ENCODE measurements at regions of chr18 and their contacts with region 1.

Region 1: GRCh38 chr18:63105636-63106316 is 213.8 kb downstream of the BCL2 start:
- DNase-seq: no peak
- H3K4me3 Mint-ChIP-seq: no peak overlapping the region
- H3K27ac Mint-ChIP-seq: no peak overlapping the region
- H3K4me1 Mint-ChIP-seq: peaks cover 37% of the 10 kb centered on the region
- H3K27me3 Mint-ChIP-seq: peaks cover 20% of the 10 kb centered on the region

Region 2: DNA sequence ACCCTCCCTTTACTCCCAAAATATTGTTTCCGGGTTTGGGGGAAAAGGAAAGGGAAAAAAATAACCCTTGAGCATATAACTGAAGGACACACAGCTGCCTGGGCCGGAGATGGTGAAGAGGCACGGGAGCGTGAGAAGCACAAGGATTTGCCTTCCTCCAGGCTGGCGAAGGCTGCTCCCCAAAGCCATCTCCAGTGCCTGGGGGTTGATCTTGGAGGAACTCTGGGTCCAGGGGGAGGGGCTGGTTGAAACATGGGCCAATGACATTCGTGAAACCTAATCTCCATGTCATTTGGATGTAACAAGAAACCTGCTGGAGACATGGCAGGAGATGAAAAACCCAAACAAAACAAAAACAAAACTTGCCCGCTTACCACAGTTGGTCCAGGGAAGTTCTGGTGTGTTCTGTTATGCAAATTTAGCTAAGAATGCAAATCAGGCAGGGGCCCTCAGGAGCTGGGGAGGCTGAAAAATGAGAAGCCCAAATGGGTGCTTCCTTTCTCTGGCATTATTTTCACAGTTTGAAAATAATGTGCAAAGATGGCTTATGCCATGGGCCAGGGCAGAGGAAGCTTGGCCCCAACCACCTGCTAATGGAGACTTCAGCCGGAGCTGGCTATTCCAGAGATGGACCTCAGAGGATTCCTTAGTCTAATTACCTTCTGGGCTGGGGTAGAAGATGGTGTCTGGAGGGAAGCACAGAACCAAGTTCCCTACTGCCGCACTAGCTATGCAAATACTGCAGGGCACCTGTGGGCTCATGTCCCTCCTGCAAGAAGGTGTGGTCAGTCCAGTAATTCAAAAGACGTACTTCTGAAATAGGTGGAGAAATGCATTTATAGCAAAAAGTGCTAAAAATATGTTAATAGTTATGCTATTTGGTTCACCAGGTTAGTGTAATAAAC is 32.9 kb after region 1 on chr18:
- intact Hi-C with region 1: loop called (anchors 1 kb)
- DNase-seq: no peak
- H3K4me3 Mint-ChIP-seq: peak overlapping the region; percentile 73
- H3K27ac Mint-ChIP-seq: peak overlapping the region; percentile 90
- H3K4me1 Mint-ChIP-seq: peaks cover 71% of the 10 kb centered on the region
- H3K27me3 Mint-ChIP-seq: no peaks in the 10 kb centered on the region

Region 3: DNA sequence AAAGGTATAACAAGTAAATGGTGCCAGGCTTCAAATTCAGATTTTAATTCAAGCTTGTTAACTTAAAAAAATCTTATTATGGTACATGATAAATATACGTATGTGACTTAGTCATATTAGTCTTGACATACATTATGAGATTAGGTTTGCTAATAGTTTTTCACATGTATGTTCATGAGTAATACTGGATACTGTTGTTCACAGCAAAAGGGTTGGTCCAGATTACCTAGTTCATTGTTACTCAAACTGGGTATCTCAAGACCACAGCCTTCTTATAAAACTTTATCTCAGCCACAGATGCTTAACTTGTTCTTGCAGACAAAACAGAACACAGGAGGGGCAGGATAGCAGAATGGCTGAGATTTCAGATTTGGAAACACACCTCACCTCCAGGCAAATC is 289.7 kb after region 1 on chr18:
- intact Hi-C with region 1: no loop called
- DNase-seq: no peak
- H3K4me3 Mint-ChIP-seq: no peak overlapping the region
- H3K27ac Mint-ChIP-seq: no peak overlapping the region
- H3K4me1 Mint-ChIP-seq: peaks cover 8% of the 10 kb centered on the region
- H3K27me3 Mint-ChIP-seq: no peaks in the 10 kb centered on the region

Region 4: DNA sequence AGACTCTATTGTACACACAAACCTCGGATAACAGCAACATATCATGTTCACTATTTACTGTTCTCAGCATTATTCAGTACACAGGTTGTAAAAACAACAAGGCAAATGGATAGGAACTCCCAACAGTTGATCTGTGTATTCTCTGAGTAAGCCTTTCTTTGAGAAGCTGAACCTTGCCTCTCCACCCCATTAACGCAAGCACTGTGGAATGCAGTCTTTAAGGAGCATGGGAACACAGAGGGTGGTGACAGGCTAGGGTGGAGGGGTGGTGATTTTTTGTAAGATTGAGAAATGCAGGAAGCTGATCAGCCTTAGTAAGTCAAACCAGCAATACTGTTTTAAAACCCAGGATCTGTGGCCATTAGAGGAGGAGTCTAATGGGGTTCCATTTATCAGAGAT is 577.4 kb after region 1 on chr18:
- intact Hi-C with region 1: no loop called
- DNase-seq: no peak
- H3K4me3 Mint-ChIP-seq: no peak overlapping the region
- H3K27ac Mint-ChIP-seq: no peak overlapping the region
- H3K4me1 Mint-ChIP-seq: no peaks in the 10 kb centered on the region
- H3K27me3 Mint-ChIP-seq: no peaks in the 10 kb centered on the region

Region 5: DNA sequence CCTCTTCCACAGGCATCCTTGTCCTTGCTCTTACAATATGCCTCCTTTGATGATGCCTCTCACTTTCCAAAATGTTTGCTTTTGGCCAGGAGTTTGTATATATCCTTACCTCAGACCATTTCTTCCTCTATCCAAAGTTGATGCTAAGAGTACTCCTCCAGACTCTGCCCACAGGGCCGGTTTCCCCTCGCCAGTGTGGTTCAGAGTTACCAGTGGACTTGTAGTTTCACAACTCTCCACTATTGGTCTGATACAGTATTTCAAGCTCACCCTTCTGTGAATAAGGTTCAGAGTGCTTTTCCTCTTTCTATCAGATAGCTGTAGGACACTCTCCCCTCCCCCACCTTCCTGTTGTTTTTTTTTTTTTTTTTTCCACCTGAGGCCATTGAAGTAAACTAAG is 1085.3 kb after region 1 on chr18:
- intact Hi-C with region 1: no loop called
- DNase-seq: no peak
- H3K4me3 Mint-ChIP-seq: no peak overlapping the region
- H3K27ac Mint-ChIP-seq: no peak overlapping the region
- H3K4me1 Mint-ChIP-seq: no peaks in the 10 kb centered on the region
- H3K27me3 Mint-ChIP-seq: no peaks in the 10 kb centered on the region

Measured in activated T-helper 1 cell treated with anti-CD3 and anti-CD28 coated beads, Interleukin-12 subunit alpha, Interleukin-12 subunit beta, Interleukin-2, Interleukin-4 antibody, amounts not matched to agents 30 ng/mL and 10 ng/mL and 1 ng/mL, durations not matched to agents 14 hours and 24 hours and 36 hours (primary cell).